GM12878 (cell line): ENCODE measurements at regions of chr17 and their contacts with region 1.

Region 1: DNA sequence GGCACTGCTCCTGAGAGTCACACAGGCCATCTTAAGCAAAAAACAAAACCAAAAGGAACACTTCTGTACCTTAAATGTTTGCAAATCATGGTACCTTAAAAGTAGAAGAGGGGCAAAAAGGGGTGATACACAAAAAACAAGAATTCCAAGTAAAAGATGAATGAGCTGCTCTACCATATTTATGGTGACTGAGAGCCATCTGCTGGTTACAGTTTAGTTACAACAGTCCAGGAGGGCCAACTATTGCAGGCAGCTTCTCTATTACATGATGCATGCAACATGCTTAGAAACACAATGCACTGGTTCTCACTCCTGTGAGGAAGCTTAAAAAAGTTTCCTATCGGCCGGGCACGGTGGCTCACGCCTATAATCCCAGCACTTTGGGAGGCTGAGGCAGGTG is 53.5 kb downstream of the STX8 start:
- DNase-seq: no peak
- ATAC-seq: peak; percentile 74
- H3K4me3 ChIP-seq: no peak overlapping the region
- H3K27ac ChIP-seq: no peak overlapping the region
- H3K4me1 ChIP-seq: no peaks in the 10 kb centered on the region
- H3K27me3 ChIP-seq: no peaks in the 10 kb centered on the region
- CTCF ChIP-seq: peak; percentile 45 to 60 (median 53); a peak in 5 of 6 replicates
- EP300 ChIP-seq: no peak
- POLR2A ChIP-seq: no peak
- RAD21 ChIP-seq: peak; percentile 83

Region 2: DNA sequence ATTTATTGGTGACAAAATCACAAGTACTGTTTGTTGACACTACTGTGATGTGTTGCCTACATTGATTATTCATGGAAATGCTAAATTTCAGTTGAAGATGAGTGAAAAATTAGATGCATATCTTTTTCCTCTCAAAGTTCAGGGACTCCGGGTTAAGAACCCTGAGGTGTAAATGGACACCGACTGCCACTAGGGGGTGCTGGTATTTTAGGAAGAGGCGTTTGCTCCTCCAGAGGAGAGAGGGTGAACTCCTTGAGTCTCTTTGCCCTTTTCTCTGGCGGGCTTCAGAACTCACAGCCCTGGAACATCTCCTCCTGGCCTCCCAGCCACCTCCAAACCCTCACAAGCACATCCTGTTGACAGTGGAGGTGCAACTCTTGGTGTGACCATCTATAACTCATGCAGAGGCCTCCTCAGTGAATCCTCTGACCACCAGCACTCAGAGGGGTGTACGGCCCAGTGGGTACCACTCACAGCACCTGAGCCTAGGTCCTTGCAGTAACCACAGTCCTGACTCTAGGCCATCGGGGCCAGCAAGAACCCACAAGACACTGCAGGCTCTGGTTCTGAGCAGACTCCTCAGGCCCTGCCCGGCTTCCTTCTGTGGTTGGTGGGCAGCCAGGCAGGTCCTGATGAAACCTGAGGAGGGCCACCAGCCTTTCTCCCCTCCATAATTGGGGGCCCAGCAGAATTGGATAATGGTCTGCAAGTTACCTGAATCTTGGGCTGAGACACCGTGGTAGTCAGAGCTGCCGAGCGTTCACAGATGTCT is 530.4 kb before region 1 on chr17:
- CTCF ChIA-PET with region 1: interaction called, 25 read pairs
- POLR2A ChIA-PET with region 1: no interaction called
- RAD21 ChIA-PET with region 1: interaction called, 14 read pairs
- SMC1A ChIA-PET with region 1: interaction called, 4 read pairs
- in situ Hi-C with region 1: no loop called
- intact Hi-C with region 1: loop called (anchors 5 kb)
- DNase-seq: no peak
- ATAC-seq: peak; percentile 74
- H3K4me3 ChIP-seq: no peak overlapping the region
- H3K27ac ChIP-seq: no peak overlapping the region
- H3K4me1 ChIP-seq: peaks cover 12% of the 10 kb centered on the region
- H3K27me3 ChIP-seq: no peaks in the 10 kb centered on the region
- CTCF ChIP-seq: peak; percentile 38 to 77 (median 71)
- EP300 ChIP-seq: no peak
- POLR2A ChIP-seq: no peak
- RAD21 ChIP-seq: peak; percentile 57

Region 3: DNA sequence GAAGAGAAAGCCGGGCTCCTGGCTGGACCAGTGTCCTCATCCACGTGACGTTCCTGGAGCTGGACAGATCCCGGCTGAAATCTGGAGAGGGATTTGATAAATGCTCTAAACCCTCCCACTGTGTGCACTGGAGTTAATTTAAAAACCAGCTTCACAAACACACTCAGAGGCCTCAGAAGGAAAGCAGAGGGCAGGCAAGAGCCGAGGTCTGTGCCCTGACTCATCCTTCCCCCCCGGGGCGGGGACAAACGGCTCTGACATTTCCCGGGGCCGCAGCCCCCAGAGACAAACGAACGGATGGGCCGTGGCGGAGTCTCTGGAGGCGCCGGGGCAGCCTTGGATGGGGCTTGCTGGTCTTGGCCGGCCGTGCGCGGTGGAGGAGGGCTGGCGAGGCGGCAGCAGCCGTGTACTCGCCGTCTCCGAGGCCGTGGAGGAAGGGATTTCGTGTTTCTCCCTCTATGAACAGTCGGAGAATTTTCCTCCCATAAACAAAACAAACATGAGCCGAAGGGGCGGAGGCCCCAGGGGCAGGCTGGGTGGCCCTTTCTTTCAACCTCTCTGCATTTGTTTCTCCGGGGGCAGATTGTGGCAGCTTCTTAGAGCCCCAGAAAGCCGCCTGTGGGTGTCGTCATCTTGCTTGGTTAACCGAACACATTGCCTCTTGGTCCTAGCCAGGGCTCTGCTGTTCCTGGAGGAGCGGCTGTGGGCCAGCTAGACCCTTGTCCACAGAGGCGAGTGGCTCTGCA is 406.5 kb before region 1 on chr17:
- CTCF ChIA-PET with region 1: interaction called, 5 read pairs
- POLR2A ChIA-PET with region 1: no interaction called
- RAD21 ChIA-PET with region 1: interaction called, 8 read pairs
- SMC1A ChIA-PET with region 1: interaction called, 12 read pairs
- in situ Hi-C with region 1: no loop called
- intact Hi-C with region 1: no loop called
- DNase-seq: no peak
- ATAC-seq: peak; percentile 42
- H3K4me3 ChIP-seq: peak overlapping the region; percentile 36; the same call in 1 of the 2 replicates
- H3K27ac ChIP-seq: no peak overlapping the region
- H3K4me1 ChIP-seq: no peaks in the 10 kb centered on the region
- H3K27me3 ChIP-seq: peaks cover 0 to 5% of the 10 kb centered on the region in 2 experiments; a peak in 2 of 4 replicates
- CTCF ChIP-seq: peak in 2 of 3 experiments; percentile 2 to 18; a peak in 2 of 6 replicates
- EP300 ChIP-seq: no peak
- POLR2A ChIP-seq: no peak
- RAD21 ChIP-seq: 0 out of 2 replicates have a peak, but pooled peaks have one; percentile 14

Region 4: GRCh38 chr17:9402590-9403199 is 119.4 kb before region 1 on chr17:
- CTCF ChIA-PET with region 1: interaction called, 16 read pairs
- POLR2A ChIA-PET with region 1: no interaction called
- RAD21 ChIA-PET with region 1: interaction called, 5 read pairs
- SMC1A ChIA-PET with region 1: no interaction called
- in situ Hi-C with region 1: loop called (anchors 5 kb)
- intact Hi-C with region 1: loop called (anchors 5 kb)
- DNase-seq: no peak
- ATAC-seq: peak; percentile 53; the same call in 2 of the 3 replicates
- H3K4me3 ChIP-seq: no peak overlapping the region
- H3K27ac ChIP-seq: no peak overlapping the region
- H3K4me1 ChIP-seq: no peaks in the 10 kb centered on the region
- H3K27me3 ChIP-seq: no peaks in the 10 kb centered on the region
- CTCF ChIP-seq: peak; percentile 55 to 60 (median 56)
- EP300 ChIP-seq: no peak
- POLR2A ChIP-seq: no peak
- RAD21 ChIP-seq: peak; percentile 60